ENCODE measurements at regions of chr18 and their contacts with region 1.

Region 1: GRCh38 chr18:32072321-32072720 is 19.4 kb upstream of the RNF138 start:
- DNase-seq: no peak
- H3K4me3 Mint-ChIP-seq: no peak overlapping the region
- H3K27ac Mint-ChIP-seq: no peak overlapping the region
- H3K4me1 Mint-ChIP-seq: peaks cover 36% of the 10 kb centered on the region
- H3K27me3 Mint-ChIP-seq: no peaks in the 10 kb centered on the region

Region 2: DNA sequence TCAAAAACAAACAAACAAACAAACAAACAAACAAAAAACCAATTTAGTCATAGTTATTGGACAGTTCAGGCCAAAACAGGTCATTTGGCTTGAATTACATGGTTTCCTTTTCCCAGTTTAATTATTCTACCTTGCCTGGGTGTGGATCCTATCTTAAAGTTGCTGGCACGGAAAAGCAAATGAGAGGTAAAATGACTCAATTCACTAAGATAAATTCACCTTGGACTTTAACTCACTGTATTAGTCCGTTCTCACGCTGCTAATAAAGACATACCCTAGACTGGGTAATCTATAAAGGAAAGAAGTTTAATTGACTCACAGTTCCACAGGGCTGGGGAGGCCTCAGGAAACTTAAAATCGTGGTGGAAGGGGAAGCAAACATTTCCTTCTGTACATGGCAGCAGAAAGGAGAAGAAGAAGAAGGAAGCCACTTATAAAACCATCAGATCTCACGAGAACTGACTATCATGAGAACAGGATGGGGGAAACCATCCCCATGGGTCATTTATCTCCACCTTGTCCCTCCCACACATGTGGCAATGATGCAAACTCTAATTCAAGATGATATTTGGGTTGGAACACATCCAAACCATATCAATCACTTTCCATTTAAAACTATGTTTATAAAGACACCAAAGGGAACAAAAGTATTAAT is 106.9 kb before region 1 on chr18:
- CTCF ChIA-PET with region 1: no interaction called
- POLR2A ChIA-PET with region 1: no interaction called
- DNase-seq: no peak
- H3K4me3 Mint-ChIP-seq: no peak overlapping the region
- H3K27ac Mint-ChIP-seq: no peak overlapping the region
- H3K4me1 Mint-ChIP-seq: no peaks in the 10 kb centered on the region
- H3K27me3 Mint-ChIP-seq: no peaks in the 10 kb centered on the region

Region 3: GRCh38 chr18:32048507-32049091 is 23.7 kb before region 1 on chr18:
- CTCF ChIA-PET with region 1: interaction called, 10 read pairs
- POLR2A ChIA-PET with region 1: no interaction called
- DNase-seq: no peak
- H3K4me3 Mint-ChIP-seq: no peak overlapping the region
- H3K27ac Mint-ChIP-seq: peak overlapping the region; percentile 72
- H3K4me1 Mint-ChIP-seq: peaks cover 41% of the 10 kb centered on the region
- H3K27me3 Mint-ChIP-seq: no peaks in the 10 kb centered on the region

Region 4: GRCh38 chr18:32086861-32087260 is 14.5 kb after region 1 on chr18:
- CTCF ChIA-PET with region 1: interaction called, 14 read pairs
- POLR2A ChIA-PET with region 1: no interaction called
- DNase-seq: no peak
- H3K4me3 Mint-ChIP-seq: no peak overlapping the region
- H3K27ac Mint-ChIP-seq: no peak overlapping the region
- H3K4me1 Mint-ChIP-seq: peaks cover 58% of the 10 kb centered on the region
- H3K27me3 Mint-ChIP-seq: peaks cover 2% of the 10 kb centered on the region